A673 (cell line): ENCODE measurements at regions of chr15 and their contacts with region 1.

Region 1: GRCh38 chr15:65384895-65385858 is 7.4 kb upstream of the IGDCC3 start:
- DNase-seq: peak; percentile 90
- H3K4me3 ChIP-seq: no peak overlapping the region
- H3K27ac ChIP-seq: no peak overlapping the region
- H3K4me1 ChIP-seq: peaks cover 9% of the 10 kb centered on the region
- H3K27me3 ChIP-seq: no peaks in the 10 kb centered on the region
- CTCF ChIP-seq: peak; percentile 91

Region 2: DNA sequence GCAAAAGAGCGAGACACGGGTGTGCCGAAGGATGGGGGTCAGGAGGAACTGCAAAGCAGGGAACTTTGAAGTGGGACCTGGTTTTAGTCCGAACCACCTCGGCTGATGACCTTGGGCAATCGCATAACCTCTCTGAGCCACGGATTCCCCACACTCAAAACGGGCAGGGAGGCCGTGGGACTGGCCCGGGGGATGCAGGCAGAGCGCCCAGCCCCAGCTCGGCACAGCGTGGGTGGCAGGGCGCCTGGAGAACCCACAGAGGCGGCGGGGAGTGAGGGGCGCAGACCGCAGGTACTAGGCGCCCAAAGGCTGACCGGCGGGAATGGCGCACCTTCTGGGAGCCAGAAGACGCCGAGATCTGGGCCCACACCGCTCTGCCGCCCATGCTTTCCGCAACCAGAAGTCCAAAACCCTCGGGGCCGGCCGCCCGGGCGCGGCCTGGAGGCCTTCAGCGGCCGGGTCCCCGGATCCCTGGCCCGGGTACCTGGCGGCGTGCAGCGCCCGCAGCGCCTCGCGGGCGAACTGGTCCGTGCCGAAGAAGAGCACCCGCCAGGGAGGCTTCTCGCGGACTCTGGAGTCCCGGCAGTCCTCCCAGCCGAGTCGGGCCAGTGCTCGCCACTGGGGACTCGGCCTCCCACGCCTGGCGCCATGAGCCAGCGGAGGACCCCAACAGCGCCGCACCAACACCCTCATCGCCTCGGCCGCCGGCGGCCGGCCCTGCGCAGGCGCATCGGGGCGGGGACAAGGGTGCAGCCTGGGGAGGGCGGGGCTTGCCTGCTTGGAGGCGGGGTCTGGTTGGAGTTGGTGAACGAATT is 356.0 kb before region 1 on chr15 and contains the start of gene MTFMT:
- CTCF ChIA-PET with region 1: no interaction called
- POLR2A ChIA-PET with region 1: no interaction called
- intact Hi-C with region 1: loop called (anchors 10 kb)
- DNase-seq: peak; percentile 93
- H3K4me3 ChIP-seq: peak within 1 kb of the TSS; percentile 75
- H3K27ac ChIP-seq: peak within 1 kb of the TSS; percentile 86
- H3K4me1 ChIP-seq: peaks cover 10% of the 10 kb centered on the region
- H3K27me3 ChIP-seq: no peaks in the 10 kb centered on the region
- CTCF ChIP-seq: no peak
- total RNA-seq, gene MTFMT: 26.2 and 32.1 TPM in 2 replicates

Region 3: DNA sequence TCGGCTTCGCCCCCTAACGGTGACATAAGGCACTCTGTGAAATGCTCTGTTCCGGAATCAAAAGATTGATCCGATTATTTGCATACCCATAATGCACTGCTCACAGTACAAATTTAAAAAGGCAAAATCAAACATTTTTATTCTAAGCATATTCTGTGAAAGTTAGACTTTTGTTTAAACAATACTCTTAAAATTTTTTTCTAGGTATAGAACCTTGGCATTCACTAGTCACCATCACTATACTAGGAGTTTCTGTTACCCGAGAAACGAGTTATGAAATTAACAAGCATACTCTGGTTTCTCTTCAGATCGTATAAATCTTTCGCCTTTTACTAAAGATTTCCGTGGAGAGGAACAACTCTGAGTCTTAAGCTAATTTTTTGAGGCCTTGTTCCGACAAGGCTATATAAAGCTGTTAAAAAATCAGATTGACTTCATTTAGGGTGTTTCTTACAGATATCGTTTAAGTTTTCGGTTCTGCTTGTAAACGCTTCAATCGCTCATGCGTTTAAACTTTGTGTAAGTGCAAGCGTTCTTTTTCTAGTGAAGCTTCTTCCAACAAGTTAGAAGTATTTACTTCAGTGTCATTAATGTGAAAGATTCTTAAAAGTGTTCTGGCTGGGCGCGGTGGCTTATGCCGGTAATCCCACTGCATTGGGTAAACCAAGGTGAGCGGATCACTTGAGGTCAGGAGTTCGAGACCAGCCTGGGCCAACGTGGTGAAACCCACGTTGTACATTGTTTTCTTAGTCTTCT is 80.6 kb before region 1 on chr15 and contains the start of gene RNU5B-1:
- CTCF ChIA-PET with region 1: interaction called, 11 read pairs
- POLR2A ChIA-PET with region 1: no interaction called
- intact Hi-C with region 1: no loop called
- DNase-seq: peak; percentile 98
- H3K4me3 ChIP-seq: peak within 1 kb of the TSS; percentile 46
- H3K27ac ChIP-seq: peak within 1 kb of the TSS; percentile 99
- H3K4me1 ChIP-seq: peaks cover 10% of the 10 kb centered on the region
- H3K27me3 ChIP-seq: no peaks in the 10 kb centered on the region
- CTCF ChIP-seq: peak; percentile 96; the same call in 1 of the 2 replicates
- total RNA-seq, gene RNU5B-1: not detected in 2 replicates

Region 4: DNA sequence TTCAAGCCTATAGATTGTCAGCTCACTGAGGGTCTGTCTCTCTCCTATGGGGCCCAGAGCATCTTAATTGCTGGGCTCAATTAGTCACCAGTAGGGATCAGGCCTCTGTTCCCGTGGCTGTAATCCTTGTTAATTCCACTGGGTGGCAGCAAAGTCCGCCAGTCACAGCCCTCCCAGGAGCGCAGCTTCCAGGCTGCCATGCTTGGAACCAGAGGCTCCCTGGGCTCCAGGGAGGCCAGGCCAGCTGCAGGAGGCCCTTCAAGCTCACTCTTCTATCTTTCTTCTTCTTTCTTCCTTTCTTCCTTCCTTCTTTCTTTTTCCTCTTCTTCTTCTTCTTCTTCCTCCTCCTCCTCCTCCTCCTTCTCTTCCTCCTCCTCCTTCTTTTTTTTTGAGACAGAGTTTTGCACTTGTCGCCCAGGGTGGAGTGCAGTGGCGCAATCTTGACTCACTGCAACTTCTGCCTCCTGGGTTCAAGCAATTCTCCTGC is 66.3 kb before region 1 on chr15:
- CTCF ChIA-PET with region 1: interaction called, 16 read pairs
- POLR2A ChIA-PET with region 1: no interaction called
- intact Hi-C with region 1: loop called (anchors 1 kb)
- DNase-seq: peak; percentile 89
- H3K4me3 ChIP-seq: no peak overlapping the region
- H3K27ac ChIP-seq: no peak overlapping the region
- H3K4me1 ChIP-seq: no peaks in the 10 kb centered on the region
- H3K27me3 ChIP-seq: no peaks in the 10 kb centered on the region
- CTCF ChIP-seq: peak; percentile 87

Region 5: GRCh38 chr15:66221126-66221525 is 835.9 kb after region 1 on chr15:
- CTCF ChIA-PET with region 1: no interaction called
- POLR2A ChIA-PET with region 1: no interaction called
- intact Hi-C with region 1: no loop called
- DNase-seq: no peak
- H3K4me3 ChIP-seq: no peak overlapping the region
- H3K27ac ChIP-seq: no peak overlapping the region
- H3K4me1 ChIP-seq: no peaks in the 10 kb centered on the region
- H3K27me3 ChIP-seq: peaks cover 69% of the 10 kb centered on the region
- CTCF ChIP-seq: no peak